CD4-positive, alpha-beta T cell (primary cell): ENCODE measurements at regions of chr7 and their contacts with region 1.

Region 1: DNA sequence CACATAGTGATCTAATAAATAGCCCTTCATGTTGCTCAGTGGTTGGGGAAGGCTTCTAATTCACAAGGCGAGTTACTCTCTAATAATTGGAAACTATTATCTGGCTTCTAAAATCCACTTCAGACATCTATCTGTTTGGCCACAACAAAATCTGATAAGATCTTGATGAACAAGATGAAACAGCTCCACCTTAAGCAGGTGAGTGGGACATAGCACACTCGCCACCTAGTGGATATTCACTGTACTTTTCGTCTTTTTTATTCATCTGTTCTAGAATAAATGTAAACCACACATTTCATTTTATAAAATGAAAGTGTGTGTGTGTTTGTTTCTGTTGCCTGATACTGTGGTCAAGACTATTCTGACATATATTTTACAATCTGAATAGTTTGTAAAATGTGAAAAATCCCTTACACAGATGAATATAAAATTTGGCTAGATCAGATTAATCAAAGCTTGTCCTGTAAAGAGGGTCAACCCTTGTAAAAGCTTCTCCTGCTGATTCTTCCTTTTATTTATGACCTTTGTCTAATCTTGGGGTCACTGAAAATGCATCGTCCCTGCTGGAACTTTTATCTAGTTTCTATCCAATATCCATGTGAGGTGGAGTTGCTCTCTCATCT is 26.5 kb upstream of the CNTNAP2 start:
- DNase-seq: peak in 3 of 14 experiments; percentile 17 to 26 (median 19)
- ATAC-seq: peak; percentile 44
- H3K4me3 ChIP-seq: no peak overlapping the region
- H3K4me3 Mint-ChIP-seq: no peak overlapping the region
- H3K27ac ChIP-seq: no peak overlapping the region
- H3K27ac Mint-ChIP-seq: no peak overlapping the region
- H3K4me1 ChIP-seq: no peaks in the 10 kb centered on the region
- H3K4me1 Mint-ChIP-seq: no peaks in the 10 kb centered on the region
- H3K27me3 ChIP-seq: no peaks in the 10 kb centered on the region
- H3K27me3 Mint-ChIP-seq: no peaks in the 10 kb centered on the region
- CTCF ChIP-seq: peak; percentile 71

Region 2: GRCh38 chr7:144670218-144670617 is 1419.9 kb before region 1 on chr7:
- CTCF ChIA-PET with region 1: no interaction called
- POLR2A ChIA-PET with region 1: no interaction called
- intact Hi-C with region 1: loop called in 1 of 2 experiments (anchors 5 kb)
- DNase-seq: peak in 2 of 14 experiments; percentile 2 to 13
- ATAC-seq: no peak
- H3K4me3 ChIP-seq: no peak overlapping the region
- H3K4me3 Mint-ChIP-seq: no peak overlapping the region
- H3K27ac ChIP-seq: no peak overlapping the region
- H3K27ac Mint-ChIP-seq: no peak overlapping the region
- H3K4me1 ChIP-seq: no peaks in the 10 kb centered on the region
- H3K4me1 Mint-ChIP-seq: no peaks in the 10 kb centered on the region
- H3K27me3 ChIP-seq: no peaks in the 10 kb centered on the region
- H3K27me3 Mint-ChIP-seq: no peaks in the 10 kb centered on the region
- CTCF ChIP-seq: peak; percentile 34

Region 3: GRCh38 chr7:145036604-145037405 is 1053.3 kb before region 1 on chr7:
- CTCF ChIA-PET with region 1: interaction called, 3 read pairs
- POLR2A ChIA-PET with region 1: no interaction called
- intact Hi-C with region 1: loop called (anchors 5 to 10 kb)
- DNase-seq: peak in 13 of 14 experiments; percentile 2 to 65 (median 10)
- ATAC-seq: peak; percentile 46
- H3K4me3 ChIP-seq: no peak overlapping the region
- H3K4me3 Mint-ChIP-seq: no peak overlapping the region
- H3K27ac ChIP-seq: no peak overlapping the region
- H3K27ac Mint-ChIP-seq: no peak overlapping the region
- H3K4me1 ChIP-seq: no peaks in the 10 kb centered on the region
- H3K4me1 Mint-ChIP-seq: no peaks in the 10 kb centered on the region
- H3K27me3 ChIP-seq: no peaks in the 10 kb centered on the region
- H3K27me3 Mint-ChIP-seq: peaks cover 24% of the 10 kb centered on the region
- CTCF ChIP-seq: peak; percentile 87

Region 4: DNA sequence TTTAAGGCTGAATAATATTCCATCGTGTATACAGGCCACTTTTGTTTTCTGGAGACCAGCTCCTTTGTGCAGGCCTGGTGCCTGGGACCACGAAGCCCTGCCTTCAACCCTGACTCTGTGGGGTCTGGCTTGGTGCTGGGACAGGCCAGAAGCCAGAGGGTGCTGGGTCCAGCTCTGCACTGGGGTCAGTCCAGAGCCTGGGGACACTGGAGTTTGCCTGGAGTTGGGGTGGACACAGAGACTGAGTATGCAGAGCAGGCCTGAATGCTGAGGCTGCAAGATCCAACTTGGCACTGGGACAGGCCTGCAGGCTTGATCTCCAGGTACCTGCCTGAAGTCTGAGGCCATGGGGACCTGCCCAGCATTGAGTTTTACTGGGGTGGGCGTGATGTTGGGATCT is 532.3 kb before region 1 on chr7:
- CTCF ChIA-PET with region 1: no interaction called
- POLR2A ChIA-PET with region 1: no interaction called
- intact Hi-C with region 1: no loop called
- DNase-seq: peak in 1 of 14 experiments; percentile 3
- ATAC-seq: no peak
- H3K4me3 ChIP-seq: no peak overlapping the region
- H3K4me3 Mint-ChIP-seq: no peak overlapping the region
- H3K27ac ChIP-seq: no peak overlapping the region
- H3K27ac Mint-ChIP-seq: no peak overlapping the region
- H3K4me1 ChIP-seq: no peaks in the 10 kb centered on the region
- H3K4me1 Mint-ChIP-seq: no peaks in the 10 kb centered on the region
- H3K27me3 ChIP-seq: no peaks in the 10 kb centered on the region
- H3K27me3 Mint-ChIP-seq: no peaks in the 10 kb centered on the region
- CTCF ChIP-seq: no peak